Activated CD4-positive, alpha-beta memory T cell treated with anti-CD3 and anti-CD28 coated beads, Interleukin-2, amount 10 ng/mL, durations not matched to agents 7 days and 5 days (primary cell): ENCODE measurements at regions of chr15 and their contacts with region 1.

Region 1: DNA sequence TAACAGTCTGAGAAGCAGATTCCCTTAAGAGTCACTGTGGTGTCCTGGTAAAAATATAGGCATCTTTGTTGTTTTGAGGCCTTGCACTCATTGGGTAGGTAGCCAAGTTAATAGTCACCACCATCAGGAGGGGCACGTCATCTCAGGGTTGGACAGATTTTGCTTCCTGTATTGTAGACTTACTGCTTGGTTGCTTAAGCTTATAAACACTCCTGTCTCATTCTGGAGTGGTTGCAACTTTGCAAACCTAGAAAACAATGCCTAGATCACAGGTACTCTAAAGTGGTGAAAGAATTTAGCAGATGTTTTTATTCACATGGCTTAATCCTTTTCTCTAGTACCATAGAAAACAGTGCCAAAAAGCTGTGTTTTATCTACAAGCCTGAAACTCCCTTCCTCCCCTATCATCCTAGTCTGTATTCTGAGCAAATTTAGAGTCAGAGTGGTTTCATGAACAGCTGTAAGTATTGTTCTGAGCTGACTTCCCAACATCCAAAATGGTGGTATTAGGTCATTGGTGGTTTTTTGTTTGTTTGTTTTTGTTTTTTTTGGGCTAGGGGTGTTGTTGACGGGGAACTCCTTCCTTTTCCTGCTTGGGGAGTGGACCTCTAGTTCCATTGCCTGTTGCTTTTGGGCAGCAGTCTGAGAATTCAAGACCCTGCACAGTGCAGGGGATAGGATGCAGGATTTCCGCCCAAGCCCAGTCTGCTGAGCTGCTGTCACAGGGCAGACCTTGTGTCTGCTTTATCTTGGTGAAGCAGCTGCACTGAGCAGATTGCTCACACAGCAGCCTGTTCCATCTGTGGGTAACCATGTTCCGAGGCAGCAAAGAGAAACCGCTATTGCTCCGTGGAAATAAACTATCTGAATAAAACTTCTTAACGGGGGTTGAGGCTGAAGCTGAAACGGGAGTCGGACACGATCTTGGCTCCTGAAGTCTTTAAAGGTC is 202.0 kb downstream of the AKAP13 start:
- DNase-seq: peak; percentile 76
- H3K4me3 Mint-ChIP-seq: peak overlapping the region; percentile 75
- H3K27ac Mint-ChIP-seq: peak overlapping the region; percentile 98
- H3K4me1 Mint-ChIP-seq: peaks cover 79% of the 10 kb centered on the region
- H3K27me3 Mint-ChIP-seq: no peaks in the 10 kb centered on the region

Region 2: GRCh38 chr15:85330901-85331588 is 251.4 kb before region 1 on chr15:
- CTCF ChIA-PET with region 1: interaction called, 6 read pairs
- POLR2A ChIA-PET with region 1: interaction called, 14 read pairs
- DNase-seq: peak; percentile 92
- H3K4me3 Mint-ChIP-seq: peak overlapping the region; percentile 88
- H3K27ac Mint-ChIP-seq: peak overlapping the region; percentile 98
- H3K4me1 Mint-ChIP-seq: peaks cover 47% of the 10 kb centered on the region
- H3K27me3 Mint-ChIP-seq: no peaks in the 10 kb centered on the region

Region 3: GRCh38 chr15:85618956-85619491 is 36.6 kb after region 1 on chr15:
- CTCF ChIA-PET with region 1: interaction called, 7 read pairs
- POLR2A ChIA-PET with region 1: interaction called, 35 read pairs
- DNase-seq: peak; percentile 45
- H3K4me3 Mint-ChIP-seq: no peak overlapping the region
- H3K27ac Mint-ChIP-seq: no peak overlapping the region
- H3K4me1 Mint-ChIP-seq: peaks cover 26% of the 10 kb centered on the region
- H3K27me3 Mint-ChIP-seq: no peaks in the 10 kb centered on the region

Region 4: GRCh38 chr15:85646538-85647091 is 64.2 kb after region 1 on chr15:
- CTCF ChIA-PET with region 1: interaction called, 4 read pairs
- POLR2A ChIA-PET with region 1: interaction called, 19 read pairs
- DNase-seq: peak; percentile 49
- H3K4me3 Mint-ChIP-seq: peak overlapping the region; percentile 17
- H3K27ac Mint-ChIP-seq: peak overlapping the region; percentile 80
- H3K4me1 Mint-ChIP-seq: peaks cover 53% of the 10 kb centered on the region
- H3K27me3 Mint-ChIP-seq: no peaks in the 10 kb centered on the region

Region 5: GRCh38 chr15:85702321-85703101 is 120.1 kb after region 1 on chr15:
- CTCF ChIA-PET with region 1: interaction called, 5 read pairs
- POLR2A ChIA-PET with region 1: interaction called, 19 read pairs
- DNase-seq: peak; percentile 44
- H3K4me3 Mint-ChIP-seq: peak overlapping the region; percentile 69
- H3K27ac Mint-ChIP-seq: peak overlapping the region; percentile 88
- H3K4me1 Mint-ChIP-seq: peaks cover 60% of the 10 kb centered on the region
- H3K27me3 Mint-ChIP-seq: no peaks in the 10 kb centered on the region